Lower leg skin (tissue), 4 donors: ENCODE measurements at regions of chr7 and their contacts with region 1.

Region 1: DNA sequence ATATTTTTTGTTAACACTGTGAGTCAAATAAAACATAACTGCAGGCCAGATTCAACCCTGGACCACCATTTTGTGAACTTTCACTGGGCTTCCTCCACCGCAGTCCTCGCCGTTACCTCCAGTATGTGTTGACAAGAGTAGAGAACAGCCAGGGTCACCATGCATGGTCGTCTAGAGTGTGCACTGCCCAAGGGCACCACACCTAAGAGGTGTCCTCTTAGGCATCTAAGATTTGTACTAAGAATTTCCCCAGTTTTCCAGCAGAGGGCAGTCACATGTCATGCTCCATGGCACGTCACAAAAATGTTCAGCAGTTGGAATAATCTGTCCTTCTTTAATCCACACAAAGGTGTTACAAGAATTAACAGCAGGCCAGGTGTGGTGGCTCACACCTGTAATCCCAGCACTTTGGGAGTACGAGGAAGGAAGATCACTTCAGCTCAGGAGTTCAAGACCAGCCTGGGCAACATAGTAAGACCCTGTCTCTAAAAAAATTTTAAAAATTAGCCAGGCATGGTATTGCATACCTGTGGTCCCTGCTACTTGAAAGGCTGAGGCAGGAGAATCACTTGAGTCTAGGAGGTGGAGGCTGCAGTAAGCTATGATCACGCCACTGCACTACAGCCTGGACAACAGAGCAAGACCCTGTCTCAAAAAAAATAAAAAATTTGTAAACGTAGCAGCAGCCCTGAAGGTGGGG is 71.2 kb upstream of the FOXK1 start:
- DNase-seq: peak in 1 of 2 donors; percentile 66
- H3K4me3 ChIP-seq: no peak overlapping the region
- CTCF ChIP-seq: peak in 1 of 3 donors; percentile 73
- POLR2A ChIP-seq: no peak

Region 2: GRCh38 chr7:3649250-3649649 is 961.7 kb before region 1 on chr7:
- intact Hi-C with region 1: no loop called
- DNase-seq: no peak
- H3K4me3 ChIP-seq: no peak overlapping the region
- CTCF ChIP-seq: no peak
- POLR2A ChIP-seq: no peak

Region 3: GRCh38 chr7:4575254-4575653 is 35.7 kb before region 1 on chr7:
- intact Hi-C with region 1: loop called (anchors 2 kb)
- DNase-seq: no peak
- H3K4me3 ChIP-seq: no peak overlapping the region
- CTCF ChIP-seq: no peak
- POLR2A ChIP-seq: no peak